ENCODE measurements at regions of chr14 and their contacts with region 1.

Region 1: GRCh38 chr14:24429395-24430142 is at the starts of genes CBLN3 and KHNYN:
- DNase-seq: peak; percentile 85
- total RNA-seq, gene CBLN3: 0.11 and 0.24 TPM in 2 replicates
- total RNA-seq, gene KHNYN: 30.9 and 37.5 TPM in 2 replicates

Region 2: GRCh38 chr14:24332268-24332993 is 97.1 kb before region 1 on chr14:
- in situ Hi-C with region 1: loop called (anchors 10 kb)
- DNase-seq: peak; percentile 66

Region 3: GRCh38 chr14:24673534-24674203 is 244.1 kb after region 1 on chr14:
- in situ Hi-C with region 1: no loop called
- DNase-seq: no peak